Ascending aorta (tissue), 2 donors: ENCODE measurements at regions of chr7 and their contacts with region 1.

Region 1: DNA sequence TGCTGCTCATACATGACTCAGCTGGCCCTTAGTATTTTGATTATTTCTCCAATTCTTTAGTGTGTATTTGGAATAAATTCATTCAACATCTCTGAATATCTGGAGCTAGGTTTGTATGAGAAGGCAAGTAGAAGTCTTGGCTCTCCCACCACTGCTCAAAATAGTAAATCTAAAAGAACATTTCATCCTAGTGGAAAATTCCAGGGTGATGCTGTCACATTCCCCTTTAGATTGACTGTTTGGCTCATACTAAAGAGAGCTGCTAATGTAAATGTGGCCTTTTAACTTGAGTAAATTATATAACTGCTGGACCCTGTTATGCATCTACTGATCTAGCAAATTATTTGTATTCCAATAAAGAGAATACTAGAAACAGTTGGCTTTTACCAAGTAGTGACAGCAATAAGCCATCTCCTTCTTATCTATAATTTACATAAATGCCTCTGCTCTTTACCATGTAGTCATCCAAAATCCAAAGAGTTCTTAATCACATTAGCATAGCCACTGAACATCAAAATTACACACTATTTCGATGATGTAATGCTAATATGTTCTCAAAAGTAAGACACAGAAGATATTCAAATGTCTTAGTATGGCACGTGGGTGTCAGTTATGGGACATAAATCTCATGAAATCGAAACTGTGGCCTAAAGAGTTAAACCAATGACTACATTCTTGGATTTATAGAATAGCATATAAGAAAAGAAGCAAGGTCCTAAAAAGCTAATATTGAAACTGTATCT is 86.9 kb upstream of the KCND2 start:
- DNase-seq: no peak
- H3K4me3 ChIP-seq: no peak overlapping the region
- H3K27ac ChIP-seq: peak overlapping the region in 1 of 2 donors; percentile 61
- H3K4me1 ChIP-seq: peaks cover 0 to 3% of the 10 kb centered on the region in 2 donors
- H3K27me3 ChIP-seq: no peaks in the 10 kb centered on the region
- CTCF ChIP-seq: no peak

Region 2: DNA sequence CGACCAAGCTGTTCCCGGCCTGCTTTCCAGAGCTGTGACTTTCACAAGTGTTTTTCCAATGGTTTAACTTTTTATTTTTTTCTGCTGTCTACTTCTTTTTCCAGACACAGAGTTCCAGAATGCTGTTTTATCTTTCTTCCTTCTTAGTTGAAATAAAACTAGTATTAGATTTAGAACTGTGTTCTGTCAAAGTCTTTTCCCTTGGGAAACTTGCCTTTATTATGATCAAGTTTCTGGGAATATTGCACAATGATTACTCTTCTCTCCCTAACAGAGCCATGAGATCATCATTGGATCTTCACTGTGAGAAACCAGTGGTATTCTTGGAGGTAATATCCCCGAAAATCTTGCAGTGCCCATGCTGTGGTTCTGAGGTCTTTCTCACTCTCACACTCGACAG is 18.0 kb before region 1 on chr7:
- intact Hi-C with region 1: loop called (anchors 2 kb)
- DNase-seq: no peak
- H3K4me3 ChIP-seq: no peak overlapping the region
- H3K27ac ChIP-seq: peak overlapping the region; percentile 34 to 64
- H3K4me1 ChIP-seq: peaks cover 0 to 8% of the 10 kb centered on the region in 2 donors
- H3K27me3 ChIP-seq: no peaks in the 10 kb centered on the region
- CTCF ChIP-seq: no peak